Right cardiac atrium (tissue), 5 donors: ENCODE measurements at regions of chr6 and their contacts with region 1.

Region 1: DNA sequence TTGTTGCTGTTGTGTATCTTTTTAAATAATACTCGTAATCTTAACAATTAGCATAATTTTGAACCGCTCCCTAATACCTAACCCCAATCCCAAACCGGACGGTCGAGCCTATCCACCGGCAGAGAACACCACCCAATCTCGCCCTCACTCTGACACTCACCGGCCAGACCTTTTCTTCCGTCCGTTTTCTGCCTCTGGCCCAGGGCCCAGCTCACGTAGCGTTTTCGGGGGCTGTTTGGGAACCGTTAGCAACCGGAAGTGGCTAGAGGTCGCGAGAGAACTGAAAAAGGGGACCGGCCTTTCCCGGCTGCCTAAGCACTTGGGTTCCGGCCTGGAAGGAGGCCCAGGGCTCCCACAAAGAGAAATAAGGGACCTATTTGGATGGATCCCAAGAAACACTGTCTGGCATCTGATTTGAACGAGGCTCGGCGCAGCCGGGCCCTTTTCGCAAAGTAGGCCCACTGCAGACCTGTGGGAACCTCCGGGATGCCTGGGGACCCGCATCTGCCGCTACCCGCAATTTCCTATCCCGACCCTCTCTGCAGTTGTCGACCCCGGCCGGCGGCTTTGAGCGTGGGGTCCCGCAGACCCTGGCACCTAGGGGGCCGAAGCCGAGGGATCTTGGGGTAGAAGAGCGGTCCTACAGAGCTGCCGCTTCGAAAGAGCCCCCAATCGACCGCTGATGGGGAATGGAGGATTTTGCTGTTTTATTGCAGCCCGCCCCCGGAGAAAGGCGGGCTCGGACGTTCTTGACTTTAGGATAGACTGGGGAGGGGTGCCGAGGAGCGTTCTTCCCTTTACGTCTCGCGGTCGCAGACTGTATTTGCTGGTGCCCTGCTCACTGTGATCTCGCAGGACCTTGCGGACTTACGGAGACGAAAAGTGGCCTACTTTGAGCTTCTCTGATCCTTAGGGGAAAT is 4.8 kb upstream of the ZKSCAN8 start:
- DNase-seq: peak; percentile 94 to 96 (median 95)
- ATAC-seq: peak; percentile 92 to 96
- H3K4me3 ChIP-seq: peak overlapping the region; percentile 66
- H3K27ac ChIP-seq: peak overlapping the region; percentile 61
- H3K4me1 ChIP-seq: no peaks in the 10 kb centered on the region
- H3K27me3 ChIP-seq: no peaks in the 10 kb centered on the region

Region 2: DNA sequence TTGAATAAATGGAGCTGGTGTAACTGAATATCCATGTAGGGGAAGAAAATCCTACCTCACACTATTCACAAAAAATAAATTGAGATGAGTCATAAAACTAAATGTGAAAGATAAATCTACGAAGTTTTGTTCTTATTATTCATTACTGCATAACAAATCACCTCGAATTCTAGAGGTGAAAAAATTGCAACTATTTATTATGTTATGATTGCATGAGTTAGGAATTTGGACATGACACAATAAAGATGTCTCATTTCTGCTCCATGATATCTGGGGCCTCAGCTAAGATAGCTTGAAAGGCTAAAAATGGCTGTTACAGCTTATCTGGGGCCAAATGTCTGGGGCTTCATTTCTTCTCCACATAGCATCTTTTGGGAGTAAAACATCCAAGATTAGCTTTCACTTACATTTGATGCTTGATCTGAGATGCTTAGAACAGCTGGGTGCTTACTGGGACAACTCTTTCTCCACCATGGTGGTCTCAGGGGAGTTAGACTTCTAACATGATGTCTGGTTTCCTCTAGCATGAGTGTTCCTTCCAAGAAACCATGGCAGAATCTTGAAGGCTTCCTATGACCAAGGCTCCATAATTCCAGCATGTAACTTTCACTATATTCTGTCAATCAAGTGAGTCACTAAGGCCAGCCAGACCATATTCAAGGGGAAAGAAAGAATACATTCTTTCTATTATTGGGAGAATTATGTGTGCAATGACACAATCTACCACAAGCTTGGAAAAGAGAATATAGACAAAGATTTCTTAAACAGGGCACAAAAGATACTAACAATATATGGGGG is 149.7 kb before region 1 on chr6:
- intact Hi-C with region 1: no loop called
- DNase-seq: no peak
- ATAC-seq: no peak
- H3K4me3 ChIP-seq: no peak overlapping the region
- H3K27ac ChIP-seq: no peak overlapping the region
- H3K4me1 ChIP-seq: no peaks in the 10 kb centered on the region
- H3K27me3 ChIP-seq: no peaks in the 10 kb centered on the region

Region 3: GRCh38 chr6:28218271-28219248 is 81.7 kb after region 1 on chr6:
- intact Hi-C with region 1: loop called in 2 of 4 experiments (anchors 10 kb)
- DNase-seq: peak; percentile 83 to 93 (median 93)
- ATAC-seq: peak; percentile 96 to 98
- H3K4me3 ChIP-seq: peak overlapping the region; percentile 86
- H3K27ac ChIP-seq: peak overlapping the region; percentile 68
- H3K4me1 ChIP-seq: no peaks in the 10 kb centered on the region
- H3K27me3 ChIP-seq: no peaks in the 10 kb centered on the region

Region 4: GRCh38 chr6:28225056-28225834 is 88.4 kb after region 1 on chr6 and contains the start of gene ZSCAN9:
- intact Hi-C with region 1: loop called in 1 of 4 experiments (anchors 10 kb)
- DNase-seq: peak; percentile 90 to 95 (median 93)
- ATAC-seq: peak; percentile 97 to 99
- H3K4me3 ChIP-seq: peak within 1 kb of the TSS; percentile 54
- H3K27ac ChIP-seq: peak within 1 kb of the TSS; percentile 54
- H3K4me1 ChIP-seq: peaks cover 2% of the 10 kb centered on the region
- H3K27me3 ChIP-seq: no peaks in the 10 kb centered on the region
- total RNA-seq, gene ZSCAN9: 8.4 to 11.3 (median 8.8) TPM

Region 5: GRCh38 chr6:28252009-28252975 is 115.4 kb after region 1 on chr6 and contains the start of gene ZKSCAN4:
- intact Hi-C with region 1: loop called in 2 of 4 experiments (anchors 10 kb)
- DNase-seq: peak; percentile 78 to 86 (median 82)
- ATAC-seq: peak; percentile 97 to 98
- H3K4me3 ChIP-seq: peak within 1 kb of the TSS; percentile 72
- H3K27ac ChIP-seq: peak within 1 kb of the TSS; percentile 22
- H3K4me1 ChIP-seq: no peaks in the 10 kb centered on the region
- H3K27me3 ChIP-seq: no peaks in the 10 kb centered on the region
- total RNA-seq, gene ZKSCAN4: 3.3 to 4.0 (median 3.6) TPM

Region 6: DNA sequence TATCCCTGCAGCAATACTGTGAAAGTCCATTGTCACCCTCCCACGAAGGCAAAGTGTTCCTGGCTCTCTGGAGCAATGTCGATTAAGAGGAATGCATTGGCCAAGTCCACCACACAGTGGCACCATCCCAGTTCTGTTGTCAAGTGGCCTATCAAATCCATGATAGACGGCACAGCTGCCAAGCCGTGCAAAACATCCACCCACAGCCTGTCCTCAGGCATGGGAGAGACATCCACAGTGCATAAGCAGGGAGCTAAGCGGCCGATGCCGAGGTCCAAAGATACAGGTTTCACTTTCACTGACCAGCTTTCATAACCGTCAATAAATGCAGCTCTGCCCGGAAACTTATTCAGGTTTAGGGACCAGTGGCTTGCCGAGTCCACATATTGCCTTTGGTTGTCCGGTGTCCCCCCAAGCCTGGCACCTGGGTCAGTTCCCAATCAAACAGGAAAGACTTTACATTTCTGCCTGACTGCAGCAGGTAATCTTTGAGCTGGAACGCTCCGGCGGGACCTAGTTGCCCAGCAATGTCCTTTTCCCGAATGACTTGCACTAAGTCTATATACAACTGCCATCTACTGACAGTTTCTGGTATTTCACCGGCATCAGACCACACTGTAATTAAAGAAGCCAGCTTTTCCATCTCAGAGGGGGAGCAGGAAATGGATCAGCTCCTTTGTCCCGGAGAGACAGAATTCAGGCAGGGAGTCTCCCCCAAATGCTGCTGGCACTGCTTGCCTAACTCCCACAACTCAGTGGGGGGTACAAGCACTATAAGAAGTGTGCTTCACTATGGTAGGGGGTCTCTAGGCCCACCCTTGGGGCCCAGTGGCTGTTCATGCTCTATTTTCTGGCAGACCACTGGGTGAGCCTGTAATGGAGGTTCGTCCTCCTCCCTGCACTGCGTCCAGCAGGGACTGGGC is 219.2 kb after region 1 on chr6:
- intact Hi-C with region 1: loop called (anchors 5 to 10 kb)
- DNase-seq: peak; percentile 66 to 88 (median 84)
- ATAC-seq: peak; percentile 89 to 90
- H3K4me3 ChIP-seq: peak overlapping the region; percentile 67
- H3K27ac ChIP-seq: peak overlapping the region; percentile 81
- H3K4me1 ChIP-seq: peaks cover 6% of the 10 kb centered on the region
- H3K27me3 ChIP-seq: no peaks in the 10 kb centered on the region